Right ventricle myocardium inferior (tissue), 1 donor: ENCODE measurements at regions of chr12 and their contacts with region 1.

Region 1: DNA sequence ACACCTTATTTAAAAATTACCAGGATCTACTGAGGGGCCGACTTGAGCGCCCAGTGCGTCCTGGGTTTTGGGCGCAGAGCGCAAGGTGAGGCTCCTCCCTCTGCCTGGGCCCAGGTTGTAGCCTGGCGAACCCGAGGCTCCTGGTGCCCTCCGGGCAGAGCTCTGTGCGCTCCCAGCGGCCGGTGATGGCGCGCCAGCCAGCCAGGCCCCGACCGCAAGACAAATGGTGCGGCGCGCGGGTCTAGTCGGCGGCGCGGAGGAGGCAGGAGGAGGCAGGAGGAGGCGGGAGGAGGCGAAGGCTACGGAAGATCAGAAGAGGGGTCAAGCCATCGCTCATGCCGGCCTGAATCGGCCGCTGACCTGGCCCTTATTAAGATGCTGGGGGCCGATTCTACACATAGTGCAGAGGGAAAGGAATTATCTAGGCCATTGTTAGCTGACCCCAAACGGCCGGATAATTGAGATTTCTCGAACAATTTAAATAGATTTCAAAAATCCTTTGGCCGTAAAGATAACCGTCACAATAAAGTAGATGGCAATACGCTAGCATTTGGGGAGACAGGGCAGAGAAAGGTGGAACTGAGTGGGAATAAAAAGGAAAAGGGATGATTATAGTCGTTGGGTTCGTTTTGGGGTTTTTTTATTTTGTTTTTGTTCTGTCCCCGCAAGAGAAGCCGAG is 2.8 kb downstream of the TBX5 start:
- DNase-seq: no peak
- ATAC-seq: peak; percentile 53

Region 2: GRCh38 chr12:114213055-114213581 is 190.0 kb before region 1 on chr12:
- intact Hi-C with region 1: no loop called
- DNase-seq: no peak
- ATAC-seq: peak; percentile 88

Region 3: DNA sequence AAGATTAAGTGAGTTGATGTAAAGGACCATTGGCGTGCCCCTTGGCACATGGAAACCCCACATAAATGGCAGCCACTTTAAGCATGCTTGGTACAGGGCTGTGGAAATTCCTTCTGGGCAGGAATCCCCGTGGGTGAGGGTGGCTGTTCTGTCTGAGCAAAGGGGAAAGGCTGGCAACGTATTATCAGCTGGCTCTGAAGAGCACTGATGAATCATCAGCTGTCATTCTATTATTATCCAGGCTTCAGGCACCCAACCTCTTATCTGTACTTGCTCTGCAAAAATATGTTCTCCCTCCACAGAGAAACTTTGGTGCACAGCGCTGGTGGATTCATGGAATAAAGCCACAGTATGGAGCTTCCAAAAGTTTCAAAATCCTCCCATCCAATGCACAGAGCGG is 164.4 kb before region 1 on chr12:
- intact Hi-C with region 1: loop called (anchors 2 kb)
- DNase-seq: no peak
- ATAC-seq: peak; percentile 95

Region 4: DNA sequence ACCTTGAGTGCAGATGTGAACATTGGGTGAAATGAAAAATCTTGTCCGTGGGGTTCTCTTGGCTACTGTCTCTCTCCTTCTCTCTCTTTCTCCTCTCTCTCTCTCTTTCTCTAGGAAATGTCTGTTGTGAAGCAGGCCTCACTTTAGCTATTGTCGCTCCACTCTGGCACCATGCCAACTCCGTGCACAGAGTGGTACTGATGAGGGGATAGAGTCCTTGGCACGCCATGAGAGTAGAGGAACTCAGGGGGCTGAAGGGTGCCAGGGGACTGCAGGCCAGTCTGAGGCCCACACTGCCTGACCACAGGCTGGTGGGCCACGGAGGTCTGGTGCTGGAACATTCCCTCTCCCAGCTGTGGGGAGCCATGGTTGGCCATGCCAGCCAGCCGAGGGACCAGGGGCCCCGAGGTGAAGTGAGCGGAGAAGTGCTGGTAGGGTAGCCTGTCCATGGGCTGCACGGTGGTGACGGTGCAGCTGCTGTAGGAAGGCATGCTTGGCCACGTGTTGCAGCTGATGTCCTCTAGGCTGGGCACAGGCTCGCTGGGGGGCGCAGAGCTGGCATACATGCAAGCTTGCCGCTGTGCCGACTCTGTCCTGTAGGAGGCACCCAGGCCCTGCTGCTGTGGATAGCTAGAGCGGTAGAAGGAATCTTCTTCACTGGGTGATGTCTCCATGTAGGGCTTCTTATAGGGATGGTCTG is 47.6 kb before region 1 on chr12:
- intact Hi-C with region 1: loop called (anchors 5 kb)
- DNase-seq: peak; percentile 69
- ATAC-seq: peak; percentile 70